ENCODE measurements at regions of chr11 and their contacts with region 1.

Region 1: DNA sequence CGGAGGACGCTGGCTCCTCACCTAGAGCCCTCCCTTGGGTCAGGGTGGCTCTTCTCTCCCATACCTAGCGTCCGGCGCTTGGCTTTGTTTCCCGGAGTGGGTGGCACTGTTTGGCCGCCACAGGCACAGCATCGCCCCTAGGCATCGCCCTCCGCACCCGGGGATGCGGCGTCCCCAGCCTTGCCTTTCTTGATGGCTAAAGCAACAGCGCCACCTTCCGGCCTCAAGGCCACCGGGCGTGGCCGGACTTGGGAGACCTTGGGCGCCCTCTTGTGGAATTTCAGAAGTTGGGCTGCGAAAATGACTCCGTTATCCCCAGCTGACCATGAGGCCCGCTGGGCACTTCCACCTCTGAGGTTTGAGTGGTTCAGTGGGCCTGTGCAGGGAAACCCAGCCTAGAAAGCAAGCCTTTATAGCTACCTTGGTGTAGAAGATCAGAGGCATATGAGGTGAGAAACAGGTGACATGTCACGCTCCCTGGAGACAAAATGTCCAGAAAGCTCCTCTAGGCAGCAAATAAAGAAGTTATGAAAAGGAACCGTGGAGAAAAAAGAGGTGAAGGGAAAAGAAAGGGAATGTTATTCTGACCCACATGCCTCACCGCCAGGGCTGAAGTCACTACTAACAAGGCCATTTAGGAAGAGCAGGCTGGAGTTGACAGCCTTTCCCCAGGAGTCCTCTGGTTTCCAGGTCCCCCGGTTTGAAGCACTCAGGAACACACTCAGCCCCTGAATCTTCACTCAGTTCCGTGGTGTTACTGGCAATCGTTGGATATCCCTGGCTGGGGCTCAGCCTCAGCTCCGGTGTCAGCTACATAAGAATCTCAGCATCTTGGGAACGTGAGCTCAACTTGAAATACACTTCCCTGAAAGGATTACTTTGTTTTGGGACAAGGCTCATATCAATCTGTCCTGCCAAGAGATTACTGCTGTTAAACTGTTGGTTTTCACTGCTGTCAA is 54.1 kb downstream of the SNX19 start:
- DNase-seq: peak; percentile 66 to 97
- H3K4me3 ChIP-seq: peak overlapping the region; percentile 34 to 45
- H3K27ac ChIP-seq: peak overlapping the region; percentile 86 to 90
- H3K4me1 ChIP-seq: peaks cover 13 to 41% of the 10 kb centered on the region in 2 donors
- H3K27me3 ChIP-seq: no peaks in the 10 kb centered on the region
- CTCF ChIP-seq: peak; percentile 99 to 100 (median 100)

Region 2: GRCh38 chr11:130671801-130672700 is 190.1 kb before region 1 on chr11:
- intact Hi-C with region 1: loop called (anchors 5 kb)
- DNase-seq: peak; percentile 47 to 88
- H3K4me3 ChIP-seq: no peak overlapping the region
- H3K27ac ChIP-seq: peak overlapping the region; percentile 41 to 94
- H3K4me1 ChIP-seq: peaks cover 18 to 52% of the 10 kb centered on the region in 2 donors
- H3K27me3 ChIP-seq: no peaks in the 10 kb centered on the region
- CTCF ChIP-seq: no peak

Region 3: DNA sequence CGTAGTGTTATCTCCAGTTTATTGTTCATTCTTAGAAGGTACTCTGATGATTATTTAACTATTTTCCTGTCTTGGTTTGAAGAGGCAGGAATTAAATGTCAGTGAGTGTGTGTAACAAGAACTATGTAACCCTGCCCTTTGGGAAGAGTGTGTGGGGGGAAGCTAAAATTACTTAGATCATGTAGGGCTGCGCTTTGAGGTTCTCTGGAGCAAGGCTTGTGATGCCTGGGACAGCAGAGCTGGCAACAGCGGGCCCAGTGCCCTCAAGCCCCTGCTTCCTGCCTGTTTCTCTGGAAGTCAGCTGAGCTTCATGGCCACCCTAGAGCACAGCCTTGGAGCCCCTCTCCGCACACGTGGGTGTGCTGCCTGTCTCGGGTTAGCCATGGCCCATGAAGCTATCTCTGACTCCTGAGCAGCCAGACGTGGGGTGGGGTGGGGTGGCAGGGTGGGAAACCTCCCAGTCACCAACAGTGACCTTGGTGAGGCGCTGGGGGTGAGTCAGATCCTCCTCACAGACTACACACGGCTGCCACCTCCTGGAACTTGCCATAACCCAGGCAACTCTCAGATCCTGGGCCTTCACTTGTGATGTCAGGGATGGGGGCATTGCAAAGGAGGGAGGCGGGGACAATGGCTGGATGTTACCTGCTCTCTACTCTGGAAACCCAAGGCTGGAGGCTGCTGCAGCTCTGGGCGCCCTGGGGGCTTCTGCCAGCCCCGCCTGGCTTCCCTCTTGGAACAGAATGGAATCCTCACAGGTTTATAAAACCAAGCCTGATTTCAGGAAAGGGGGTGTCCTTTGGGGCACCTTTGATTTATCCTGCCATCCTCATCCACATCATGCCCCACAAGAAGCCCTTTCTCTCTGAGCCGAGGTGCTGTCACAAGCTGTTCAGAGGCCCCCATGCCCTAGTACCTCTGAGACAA is 34.5 kb before region 1 on chr11:
- intact Hi-C with region 1: loop called (anchors 2 kb)
- DNase-seq: peak in 1 of 2 donors; percentile 86
- H3K4me3 ChIP-seq: no peak overlapping the region
- H3K27ac ChIP-seq: peak overlapping the region; percentile 60 to 63
- H3K4me1 ChIP-seq: peaks cover 10 to 30% of the 10 kb centered on the region in 2 donors
- H3K27me3 ChIP-seq: no peaks in the 10 kb centered on the region
- CTCF ChIP-seq: peak; percentile 39 to 59 (median 56)

Region 4: DNA sequence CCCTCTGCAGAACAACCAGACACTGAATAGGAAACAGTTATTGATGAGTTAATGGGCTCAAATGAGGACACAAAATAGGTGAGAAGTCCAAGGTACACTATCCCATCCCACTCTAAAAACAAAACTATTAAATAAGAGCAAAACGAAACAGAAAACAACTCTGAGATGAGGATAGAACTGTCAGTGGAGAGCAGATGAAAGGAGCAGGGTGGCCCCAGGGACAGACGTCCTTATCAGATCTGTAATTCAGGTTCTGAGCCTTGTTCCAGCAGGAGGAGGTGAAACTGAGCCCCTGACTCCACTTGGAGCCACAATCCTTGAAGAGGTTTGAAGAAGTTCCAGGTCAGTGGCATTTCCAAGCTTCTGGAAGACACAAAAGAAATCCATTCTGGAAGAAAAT is 62.6 kb after region 1 on chr11:
- intact Hi-C with region 1: no loop called
- DNase-seq: no peak
- H3K4me3 ChIP-seq: no peak overlapping the region
- H3K27ac ChIP-seq: no peak overlapping the region
- H3K4me1 ChIP-seq: no peaks in the 10 kb centered on the region
- H3K27me3 ChIP-seq: no peaks in the 10 kb centered on the region
- CTCF ChIP-seq: no peak

Measured in ascending aorta (tissue), 2 donors.